ENCODE measurements at regions of chr10 and their contacts with region 1.

Region 1: DNA sequence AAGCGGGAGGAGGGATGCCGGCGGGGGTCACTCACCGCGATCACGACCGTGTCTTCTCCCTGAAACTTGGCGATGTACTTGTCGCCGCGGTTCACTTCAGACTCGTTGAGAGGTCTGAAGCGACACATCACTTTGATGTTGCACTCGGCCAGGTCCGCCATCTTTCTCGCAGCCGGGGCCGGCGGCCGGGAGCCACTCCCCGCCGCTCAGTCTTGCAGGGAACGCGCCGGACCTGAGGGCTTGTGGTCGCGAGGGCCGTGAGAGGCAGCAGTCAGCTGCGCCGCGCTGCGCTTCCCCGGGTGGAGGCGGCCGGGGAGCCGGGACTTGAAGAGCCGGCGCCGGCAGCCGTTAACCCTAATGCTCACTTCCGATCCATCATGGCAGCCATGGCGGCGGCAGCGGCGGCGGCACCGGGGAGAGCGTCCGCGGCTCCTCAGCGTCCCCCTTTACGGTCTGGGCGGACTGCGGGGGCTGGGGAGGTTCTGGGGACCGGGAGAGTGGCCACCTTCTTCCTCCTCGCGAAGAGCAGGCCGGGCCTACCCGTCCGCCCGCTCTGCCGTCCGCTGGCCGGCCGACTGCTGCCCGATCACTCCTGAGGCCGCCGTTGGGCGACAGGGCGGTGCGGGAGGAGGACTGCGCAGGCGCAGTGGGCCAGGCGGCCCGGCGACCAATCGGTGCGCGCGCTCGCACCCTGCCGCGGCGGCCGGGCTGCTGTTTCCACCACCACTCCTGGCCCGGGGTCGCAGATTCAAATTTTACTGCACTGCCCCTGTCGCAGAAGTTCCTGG is at the start of gene KIF5B:
- H3K4me3 Mint-ChIP-seq: peak within 1 kb of the TSS; percentile 98
- H3K27ac Mint-ChIP-seq: peak within 1 kb of the TSS; percentile 93
- H3K4me1 Mint-ChIP-seq: peaks cover 54% of the 10 kb centered on the region
- H3K27me3 Mint-ChIP-seq: no peaks in the 10 kb centered on the region

Region 2: DNA sequence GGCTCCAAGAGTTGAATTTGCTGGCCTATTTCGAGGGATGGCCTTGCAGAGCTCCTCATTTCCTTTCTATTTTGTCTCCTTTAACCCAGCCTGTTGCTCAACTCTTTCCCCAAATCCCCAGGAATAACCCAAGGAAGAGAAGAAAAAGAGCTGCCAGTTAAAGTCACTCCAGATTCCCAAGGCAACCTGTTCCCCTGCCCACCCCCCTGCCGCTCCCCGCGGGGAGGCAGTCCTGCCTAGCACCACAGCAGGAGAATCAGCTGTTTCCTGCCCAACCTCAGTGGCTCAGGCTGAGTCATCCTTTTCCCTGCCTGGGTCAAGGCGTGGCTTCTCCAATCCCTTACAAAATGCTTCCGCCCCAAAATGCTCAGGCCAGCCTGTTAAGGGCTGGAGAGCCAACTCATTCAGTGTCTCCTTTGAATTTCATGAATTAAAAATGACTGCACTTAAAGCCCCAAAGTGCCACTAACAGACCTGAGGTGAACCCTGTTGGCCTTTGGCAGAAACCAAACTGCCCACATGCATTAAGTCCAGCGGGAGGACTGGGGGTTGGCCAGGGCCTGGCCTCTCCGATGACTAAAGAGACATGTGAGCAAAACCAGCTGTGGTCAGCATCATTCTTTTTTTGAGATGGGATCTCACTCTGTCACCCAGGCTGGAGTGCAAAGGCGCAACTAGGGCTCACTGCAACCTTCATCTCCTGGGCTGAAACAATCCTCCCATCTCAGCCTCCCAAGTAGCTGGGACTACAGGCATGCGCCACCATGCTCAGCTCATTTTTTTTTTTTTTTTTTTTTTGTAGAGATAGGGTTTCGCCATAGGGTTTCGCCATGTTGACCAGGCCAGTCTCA is 83.4 kb after region 1 on chr10:
- intact Hi-C with region 1: loop called (anchors 5 kb)
- H3K4me3 Mint-ChIP-seq: peak overlapping the region; percentile 30
- H3K27ac Mint-ChIP-seq: no peak overlapping the region
- H3K4me1 Mint-ChIP-seq: peaks cover 19% of the 10 kb centered on the region
- H3K27me3 Mint-ChIP-seq: no peaks in the 10 kb centered on the region

Region 3: GRCh38 chr10:32199724-32200394 is 143.9 kb after region 1 on chr10:
- intact Hi-C with region 1: loop called (anchors 5 kb)
- H3K4me3 Mint-ChIP-seq: no peak overlapping the region
- H3K27ac Mint-ChIP-seq: peak overlapping the region; percentile 58
- H3K4me1 Mint-ChIP-seq: peaks cover 49% of the 10 kb centered on the region
- H3K27me3 Mint-ChIP-seq: no peaks in the 10 kb centered on the region

Measured in dendritic cell treated with granulocyte-macrophage colony-stimulating factor and Interleukin-4, amounts not matched to agents 40 ng/mL and 50 ng/mL, for 4 days (primary cell).